Ovary (tissue), 10 donors: ENCODE measurements at regions of chr12 and their contacts with region 1.

Region 1: GRCh38 chr12:123886931-123887615 is 85.6 kb downstream of the CCDC92 start:
- DNase-seq: no peak
- H3K4me3 ChIP-seq: no peak overlapping the region
- H3K27ac ChIP-seq: no peak overlapping the region
- H3K4me1 ChIP-seq: no peaks in the 10 kb centered on the region
- H3K27me3 ChIP-seq: no peaks in the 10 kb centered on the region
- CTCF ChIP-seq: no peak
- EP300 ChIP-seq: no peak
- POLR2A ChIP-seq: no peak

Region 2: GRCh38 chr12:122635471-122635870 is 1251.6 kb before region 1 on chr12:
- intact Hi-C with region 1: no loop called
- DNase-seq: no peak
- H3K4me3 ChIP-seq: no peak overlapping the region
- H3K27ac ChIP-seq: no peak overlapping the region
- H3K4me1 ChIP-seq: no peaks in the 10 kb centered on the region
- H3K27me3 ChIP-seq: no peaks in the 10 kb centered on the region
- CTCF ChIP-seq: no peak
- EP300 ChIP-seq: no peak
- POLR2A ChIP-seq: no peak

Region 3: GRCh38 chr12:123559468-123559867 is 327.6 kb before region 1 on chr12:
- intact Hi-C with region 1: loop called in 1 of 4 experiments (anchors 10 kb)
- DNase-seq: no peak
- H3K4me3 ChIP-seq: no peak overlapping the region
- H3K27ac ChIP-seq: no peak overlapping the region
- H3K4me1 ChIP-seq: no peaks in the 10 kb centered on the region
- H3K27me3 ChIP-seq: no peaks in the 10 kb centered on the region
- CTCF ChIP-seq: no peak
- EP300 ChIP-seq: no peak
- POLR2A ChIP-seq: no peak

Region 4: DNA sequence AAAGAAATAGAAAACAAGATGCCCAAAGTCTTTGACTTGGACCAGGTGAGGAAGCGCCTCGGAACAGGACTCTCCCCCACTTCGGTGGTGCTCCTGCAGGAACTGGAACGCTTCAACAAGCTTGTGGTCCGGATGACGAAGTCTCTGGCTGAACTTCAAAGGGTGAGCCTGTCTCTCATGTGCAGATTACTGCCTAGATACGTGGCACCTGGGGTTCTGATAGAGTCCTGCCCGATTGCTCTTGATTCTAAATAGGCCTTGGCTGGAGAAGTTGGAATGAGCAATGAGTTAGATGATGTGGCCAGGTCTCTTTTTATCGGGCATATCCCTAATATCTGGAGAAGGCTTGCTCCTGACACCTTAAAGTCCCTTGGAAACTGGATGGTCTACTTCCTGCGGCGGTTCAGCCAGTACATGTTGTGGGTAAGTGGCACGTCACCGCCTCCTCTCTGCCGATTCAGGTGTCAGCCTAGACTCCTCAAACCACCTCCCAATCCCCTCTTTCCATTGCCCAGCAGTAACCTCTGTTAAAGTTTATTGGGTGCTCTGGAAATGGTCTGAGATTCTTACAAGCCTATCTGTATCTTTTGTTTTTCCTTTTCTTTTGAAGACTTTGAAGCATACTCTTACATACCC is 44.7 kb after region 1 on chr12:
- intact Hi-C with region 1: no loop called
- DNase-seq: no peak
- H3K4me3 ChIP-seq: no peak overlapping the region
- H3K27ac ChIP-seq: no peak overlapping the region
- H3K4me1 ChIP-seq: no peaks in the 10 kb centered on the region
- H3K27me3 ChIP-seq: no peaks in the 10 kb centered on the region
- CTCF ChIP-seq: no peak
- EP300 ChIP-seq: no peak
- POLR2A ChIP-seq: no peak